OCI-LY7 (cell line): ENCODE measurements at regions of chr6 and their contacts with region 1.

Region 1: DNA sequence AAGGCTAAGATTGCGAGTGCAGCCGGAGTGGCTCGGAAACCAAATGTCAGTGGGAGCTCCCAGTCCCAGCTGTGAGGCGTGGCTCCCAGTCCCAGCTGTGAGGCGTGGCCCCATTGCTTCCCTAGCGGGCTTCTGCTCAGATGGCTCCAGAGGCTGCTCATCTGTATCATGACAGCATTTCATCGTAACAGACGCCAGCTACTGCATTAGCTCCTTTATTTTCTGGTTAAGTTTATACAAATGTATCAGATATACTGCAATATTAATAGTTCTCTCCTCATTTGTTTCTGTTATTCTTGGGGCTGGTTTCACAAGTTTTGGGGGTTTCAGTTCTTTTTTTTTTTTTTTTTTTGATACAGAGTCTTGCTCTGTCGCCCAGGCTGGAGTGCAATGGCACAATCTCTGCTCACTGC is 34.7 kb upstream of the TBXT start:
- DNase-seq: peak; percentile 87
- H3K4me3 ChIP-seq: peak overlapping the region; percentile 43
- H3K27ac ChIP-seq: peak overlapping the region; percentile 92
- H3K4me1 ChIP-seq: peaks cover 66% of the 10 kb centered on the region
- CTCF ChIP-seq: no peak

Region 2: DNA sequence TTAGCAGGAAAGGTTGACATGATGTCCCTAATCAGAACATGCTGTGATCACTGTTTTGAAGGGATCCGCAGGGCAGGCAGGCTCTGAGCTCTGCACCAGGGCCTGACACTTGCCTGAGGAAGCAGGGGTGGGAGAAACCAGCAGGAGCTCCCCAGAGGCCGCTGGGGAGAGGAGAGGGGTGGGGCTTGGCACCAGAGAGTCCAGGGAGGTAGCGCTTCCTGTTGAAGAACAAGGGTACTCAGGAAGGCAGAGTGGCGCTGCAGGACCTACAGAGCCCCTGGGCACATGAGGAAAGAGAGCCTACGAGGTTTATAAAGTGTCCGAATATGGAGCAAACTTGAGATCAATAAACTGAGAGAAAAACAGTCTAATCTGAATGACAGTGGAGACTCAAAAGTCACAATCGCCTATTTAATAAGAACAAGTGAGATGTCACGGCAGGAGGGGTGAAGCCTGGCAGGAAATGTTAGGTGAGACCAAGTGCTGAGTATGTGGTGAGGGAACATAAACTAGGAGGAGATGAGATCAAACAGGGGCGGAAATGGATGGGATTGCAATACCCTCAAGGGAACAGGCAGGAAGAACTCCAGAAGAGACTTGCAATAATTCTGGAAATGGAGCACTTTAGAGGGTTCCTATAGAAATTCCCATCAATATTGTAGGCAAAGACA is 28.9 kb before region 1 on chr6:
- CTCF ChIA-PET with region 1: interaction called, 6 read pairs
- POLR2A ChIA-PET with region 1: interaction called, 5 read pairs
- intact Hi-C with region 1: loop called (anchors 2 kb)
- DNase-seq: peak; percentile 54
- H3K4me3 ChIP-seq: peak overlapping the region; percentile 11
- H3K27ac ChIP-seq: peak overlapping the region; percentile 51
- H3K4me1 ChIP-seq: peaks cover 48% of the 10 kb centered on the region
- CTCF ChIP-seq: peak; percentile 53; the same call in 1 of the 2 replicates

Region 3: DNA sequence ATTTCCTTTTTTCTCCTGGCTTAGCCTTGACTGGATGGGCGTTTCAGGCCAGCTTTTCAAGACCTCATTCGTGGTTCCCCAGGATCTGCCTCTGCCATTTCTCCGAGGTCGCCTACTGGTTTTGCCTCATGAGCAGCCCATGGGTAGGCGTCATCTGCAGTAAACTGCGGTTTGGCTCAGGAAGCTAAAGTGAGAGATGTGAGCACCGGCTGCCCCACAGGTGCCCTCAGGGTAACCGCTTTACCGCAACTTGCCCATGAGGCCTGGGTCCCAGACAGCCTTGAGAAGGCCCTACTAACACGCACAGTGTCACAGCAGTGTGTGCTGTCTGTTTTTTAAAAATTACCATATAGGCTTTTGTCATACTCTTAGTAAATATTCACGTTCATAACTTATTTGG is 18.7 kb after region 1 on chr6:
- CTCF ChIA-PET with region 1: no interaction called
- POLR2A ChIA-PET with region 1: interaction called, 3 read pairs
- intact Hi-C with region 1: loop called (anchors 1 kb)
- DNase-seq: no peak
- H3K4me3 ChIP-seq: no peak overlapping the region
- H3K27ac ChIP-seq: peak overlapping the region; percentile 66
- H3K4me1 ChIP-seq: peaks cover 18% of the 10 kb centered on the region
- CTCF ChIP-seq: no peak

Region 4: DNA sequence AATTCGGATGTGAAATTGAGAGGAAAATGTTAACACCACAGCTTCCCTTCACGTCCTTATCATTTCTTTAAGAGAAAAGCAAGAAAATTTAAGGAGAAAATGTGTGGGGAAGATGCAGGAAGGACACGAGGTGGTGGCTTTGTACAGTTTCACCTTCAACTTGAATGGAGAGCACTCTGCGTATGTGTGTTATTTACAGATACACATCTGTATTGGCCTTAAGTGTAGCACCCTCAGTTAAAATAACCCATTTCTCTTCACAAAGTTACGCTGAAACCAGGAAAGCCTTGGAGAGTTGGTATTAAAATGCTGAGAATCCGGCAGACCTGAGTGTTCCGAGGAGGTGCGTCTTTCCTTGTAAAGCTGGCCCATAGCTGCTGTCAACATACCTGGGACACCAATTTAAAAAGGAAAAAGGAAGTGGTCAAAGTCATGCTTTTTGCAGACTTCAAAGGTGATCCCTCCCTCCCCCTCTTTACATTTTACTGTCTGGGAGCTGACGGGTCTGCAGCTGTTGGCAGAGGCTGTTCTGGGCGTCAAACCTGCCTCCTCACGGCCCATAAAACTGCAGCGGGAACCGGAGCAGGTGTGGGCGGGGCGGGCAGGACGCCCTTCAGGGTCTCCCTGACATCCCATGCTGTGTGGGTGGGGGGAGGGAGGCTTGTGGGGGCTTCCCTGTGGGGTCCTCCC is 26.7 kb after region 1 on chr6:
- CTCF ChIA-PET with region 1: no interaction called
- POLR2A ChIA-PET with region 1: interaction called, 7 read pairs
- intact Hi-C with region 1: loop called (anchors 2 kb)
- DNase-seq: peak; percentile 81
- H3K4me3 ChIP-seq: peak overlapping the region; percentile 45
- H3K27ac ChIP-seq: peak overlapping the region; percentile 68
- H3K4me1 ChIP-seq: peaks cover 45% of the 10 kb centered on the region
- CTCF ChIP-seq: no peak